Activated CD4-positive, alpha-beta T cell treated with anti-CD3 and anti-CD28 coated beads, Interleukin-2, amount 10 ng/mL, durations not matched to agents 24 days and 14 days (primary cell): ENCODE measurements at regions of chr5 and their contacts with region 1.

Region 1: DNA sequence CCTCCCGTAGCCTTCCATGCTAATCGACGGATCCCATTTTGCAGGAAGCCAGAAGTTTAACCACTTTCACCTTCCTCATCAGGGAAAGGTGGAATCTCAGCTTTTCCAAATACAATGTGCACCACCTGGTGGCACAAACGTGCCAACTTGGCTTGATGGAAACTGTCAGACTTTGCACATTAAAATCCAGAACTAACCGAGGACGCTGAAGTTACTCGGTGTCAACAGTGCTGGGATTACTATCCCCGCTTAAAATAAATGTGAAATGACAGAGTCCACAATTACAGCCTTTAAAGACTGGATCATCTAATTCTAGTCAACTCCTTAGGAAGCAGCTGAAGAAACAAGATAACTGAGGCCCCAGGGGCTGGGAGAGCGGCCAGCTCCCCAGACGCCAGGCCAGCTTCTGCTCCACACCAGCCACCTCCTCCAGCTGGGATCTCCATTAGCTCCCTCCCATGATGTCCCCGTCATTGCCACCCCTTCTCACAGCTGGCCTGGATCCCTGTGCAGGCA is 50.1 kb upstream of the RETREG1 start:
- DNase-seq: peak; percentile 76
- H3K4me3 Mint-ChIP-seq: no peak overlapping the region
- H3K27ac Mint-ChIP-seq: no peak overlapping the region
- H3K4me1 Mint-ChIP-seq: no peaks in the 10 kb centered on the region
- H3K27me3 Mint-ChIP-seq: no peaks in the 10 kb centered on the region

Region 2: DNA sequence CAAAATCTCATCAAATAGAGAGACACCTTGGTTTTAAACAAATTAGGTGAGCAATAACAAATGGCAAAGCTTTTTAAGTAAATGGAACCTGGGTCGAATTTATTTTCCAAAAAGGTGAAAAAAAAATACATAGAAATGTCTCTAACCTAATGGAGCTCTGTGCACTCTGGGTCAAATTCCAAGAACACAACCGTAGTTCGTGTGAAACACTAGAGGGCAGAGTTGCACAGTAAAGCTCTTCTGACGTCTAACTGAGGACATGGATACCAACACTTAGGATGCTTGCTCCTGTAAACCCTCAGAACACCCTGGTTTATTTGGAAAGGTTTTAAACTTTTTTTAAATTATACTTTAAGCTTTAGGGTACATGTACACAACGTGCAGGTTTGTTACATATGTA is 506.2 kb before region 1 on chr5:
- intact Hi-C with region 1: loop called (anchors 5 kb)
- DNase-seq: peak; percentile 73
- H3K4me3 Mint-ChIP-seq: no peak overlapping the region
- H3K27ac Mint-ChIP-seq: no peak overlapping the region
- H3K4me1 Mint-ChIP-seq: no peaks in the 10 kb centered on the region
- H3K27me3 Mint-ChIP-seq: peaks cover 2% of the 10 kb centered on the region

Region 3: DNA sequence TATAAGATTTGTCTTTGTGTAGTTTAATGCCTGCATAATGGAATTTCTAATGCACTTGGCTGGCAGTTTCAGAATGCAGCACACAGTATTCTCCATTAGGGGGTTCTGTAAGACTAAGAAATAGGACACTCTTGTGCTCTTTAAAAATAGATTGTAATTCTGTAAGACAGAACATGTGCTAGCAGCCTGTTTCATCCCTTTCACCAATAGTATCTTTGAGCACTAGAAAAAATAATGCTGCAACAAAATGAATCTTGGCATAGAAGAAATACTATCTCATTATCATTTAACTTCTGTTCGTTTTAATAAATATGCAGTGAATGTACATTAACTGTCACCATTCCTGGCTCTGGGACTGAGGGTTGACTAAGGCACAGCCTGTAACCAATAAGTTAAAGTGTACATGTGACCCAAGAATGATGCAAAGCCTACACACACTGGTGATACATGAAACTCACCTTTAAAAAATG is 177.6 kb before region 1 on chr5:
- intact Hi-C with region 1: loop called (anchors 1 kb)
- DNase-seq: no peak
- H3K4me3 Mint-ChIP-seq: no peak overlapping the region
- H3K27ac Mint-ChIP-seq: no peak overlapping the region
- H3K4me1 Mint-ChIP-seq: peaks cover 4% of the 10 kb centered on the region
- H3K27me3 Mint-ChIP-seq: no peaks in the 10 kb centered on the region

Region 4: GRCh38 chr5:16552666-16553343 is 114.1 kb before region 1 on chr5:
- intact Hi-C with region 1: loop called (anchors 5 kb)
- DNase-seq: peak; percentile 84
- H3K4me3 Mint-ChIP-seq: no peak overlapping the region
- H3K27ac Mint-ChIP-seq: no peak overlapping the region
- H3K4me1 Mint-ChIP-seq: peaks cover 15% of the 10 kb centered on the region
- H3K27me3 Mint-ChIP-seq: no peaks in the 10 kb centered on the region

Region 5: DNA sequence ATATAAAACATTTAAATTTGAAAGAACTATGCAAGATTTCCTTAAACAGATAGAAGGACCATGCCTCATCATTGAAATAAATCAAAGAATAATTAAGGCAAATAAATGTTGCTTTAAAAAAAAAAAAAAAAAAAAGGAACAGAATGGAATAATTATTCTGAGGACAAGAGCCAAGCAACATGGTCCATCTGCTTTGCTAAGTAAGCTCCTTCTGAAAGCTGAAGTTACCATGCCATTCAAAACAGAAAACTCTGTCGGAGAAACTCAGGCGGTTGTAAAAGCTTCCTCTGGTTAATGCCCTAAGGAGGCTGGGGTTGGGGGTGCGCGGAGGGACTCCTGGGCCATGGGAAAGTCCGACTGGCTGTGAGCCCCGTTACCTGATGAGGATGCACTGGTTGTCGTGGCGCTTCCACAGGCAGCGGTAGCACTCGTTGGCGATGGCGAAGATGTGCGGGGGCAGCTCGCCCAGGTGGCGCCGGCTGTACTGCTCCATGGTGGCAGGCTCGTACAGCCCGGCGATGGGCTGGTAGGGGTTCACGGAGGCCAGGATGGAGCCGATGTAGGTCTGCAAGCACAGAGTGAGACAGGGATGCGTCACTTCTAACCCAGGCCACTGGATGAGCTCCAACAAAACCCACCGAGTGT is 127.5 kb after region 1 on chr5:
- intact Hi-C with region 1: no loop called
- DNase-seq: no peak
- H3K4me3 Mint-ChIP-seq: no peak overlapping the region
- H3K27ac Mint-ChIP-seq: no peak overlapping the region
- H3K4me1 Mint-ChIP-seq: peaks cover 2% of the 10 kb centered on the region
- H3K27me3 Mint-ChIP-seq: peaks cover 2% of the 10 kb centered on the region